CD4-positive, alpha-beta memory T cell (primary cell): ENCODE measurements at regions of chr12 and their contacts with region 1.

Region 1: DNA sequence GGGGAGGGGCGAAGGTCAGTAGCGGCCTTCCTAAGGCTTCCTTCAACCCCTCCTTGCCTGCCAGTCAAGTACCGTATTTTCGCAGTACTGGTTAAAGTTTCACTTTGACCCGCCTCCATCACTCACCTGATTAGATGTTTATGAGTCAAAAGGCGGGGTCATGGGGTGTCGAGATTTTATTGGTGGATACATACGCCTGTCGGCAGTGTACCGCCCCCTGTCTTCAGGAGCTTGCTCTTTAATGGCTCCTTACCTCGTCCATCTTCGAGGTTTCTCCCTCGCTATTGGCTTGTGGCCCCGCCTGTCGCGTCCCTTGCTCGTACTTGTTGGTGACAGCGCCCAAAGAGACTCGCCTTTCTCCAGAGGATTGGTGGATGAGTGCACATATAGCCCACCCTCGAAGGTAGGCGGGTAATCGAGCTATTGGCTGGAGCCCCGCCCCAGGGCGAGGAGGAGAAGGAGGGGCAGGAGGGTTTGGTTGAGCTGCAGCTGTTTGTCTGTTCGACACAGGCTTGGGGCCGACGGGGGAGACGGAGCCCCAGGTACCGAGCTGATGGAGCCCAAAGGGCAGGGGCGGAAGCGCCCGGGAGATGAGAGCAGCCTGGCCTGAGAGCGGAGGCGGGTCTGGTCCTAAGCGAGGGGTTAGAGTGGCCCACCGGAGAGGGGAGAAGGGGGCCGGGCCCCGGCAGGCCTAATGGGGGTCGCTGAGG is at the start of gene RAB5B:
- DNase-seq: peak; percentile 95 to 100 (median 99)
- H3K4me3 ChIP-seq: peak within 1 kb of the TSS; percentile 60 to 73
- H3K4me3 Mint-ChIP-seq: no peak within 1 kb of the TSS
- H3K27ac ChIP-seq: peak within 1 kb of the TSS; percentile 87
- H3K27ac Mint-ChIP-seq: no peak within 1 kb of the TSS
- H3K4me1 ChIP-seq: peaks cover 37% of the 10 kb centered on the region
- H3K4me1 Mint-ChIP-seq: peaks cover 14 to 30% (median 23%) of the 10 kb centered on the region in 4 donors
- H3K27me3 ChIP-seq: no peaks in the 10 kb centered on the region
- H3K27me3 Mint-ChIP-seq: no peaks in the 10 kb centered on the region
- total RNA-seq, gene RAB5B: 106 to 112 TPM

Region 2: DNA sequence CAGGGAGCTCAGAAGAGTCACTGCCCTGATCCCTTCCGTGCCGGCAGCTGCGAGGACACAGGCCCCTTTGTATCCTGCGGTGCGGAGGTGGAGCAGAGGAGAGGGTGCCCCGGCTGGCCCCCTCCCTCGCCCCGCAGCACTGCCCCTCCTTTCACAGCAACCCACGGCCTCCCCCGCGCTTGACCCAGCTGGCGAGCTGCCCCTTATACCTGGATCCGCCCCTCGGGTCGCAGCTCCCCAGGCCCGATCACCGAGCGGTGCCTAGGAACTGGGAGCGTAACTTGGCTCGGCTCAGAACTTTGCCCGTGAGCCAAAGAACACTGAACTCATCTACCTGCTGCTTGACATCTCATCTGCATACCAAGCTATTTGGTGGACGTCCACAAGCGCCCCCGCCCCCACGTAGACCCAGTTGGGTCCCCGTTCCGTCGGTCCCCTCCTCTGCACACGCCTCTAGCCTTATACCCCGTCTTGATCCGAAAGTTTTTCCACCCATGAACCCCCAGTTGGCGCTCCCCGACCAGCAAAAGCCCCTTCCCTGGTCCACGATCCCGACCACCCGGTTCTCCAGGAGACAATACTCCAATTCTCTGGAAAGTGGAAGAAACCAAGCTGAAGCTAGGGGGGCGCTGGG is 143.7 kb before region 1 on chr12:
- CTCF ChIA-PET with region 1: interaction called, 4 read pairs
- POLR2A ChIA-PET with region 1: interaction called, 39 read pairs
- intact Hi-C with region 1: loop called (anchors 1 kb)
- DNase-seq: peak in 4 of 5 donors; percentile 18 to 55 (median 22)
- H3K4me3 ChIP-seq: peak overlapping the region; percentile 88 to 93
- H3K4me3 Mint-ChIP-seq: peak overlapping the region; percentile 95 to 99 (median 98)
- H3K27ac ChIP-seq: peak overlapping the region; percentile 59
- H3K27ac Mint-ChIP-seq: peak overlapping the region; percentile 89 to 97 (median 95)
- H3K4me1 ChIP-seq: peaks cover 54% of the 10 kb centered on the region
- H3K4me1 Mint-ChIP-seq: peaks cover 28 to 66% (median 41%) of the 10 kb centered on the region in 4 donors
- H3K27me3 ChIP-seq: no peaks in the 10 kb centered on the region
- H3K27me3 Mint-ChIP-seq: no peaks in the 10 kb centered on the region

Region 3: DNA sequence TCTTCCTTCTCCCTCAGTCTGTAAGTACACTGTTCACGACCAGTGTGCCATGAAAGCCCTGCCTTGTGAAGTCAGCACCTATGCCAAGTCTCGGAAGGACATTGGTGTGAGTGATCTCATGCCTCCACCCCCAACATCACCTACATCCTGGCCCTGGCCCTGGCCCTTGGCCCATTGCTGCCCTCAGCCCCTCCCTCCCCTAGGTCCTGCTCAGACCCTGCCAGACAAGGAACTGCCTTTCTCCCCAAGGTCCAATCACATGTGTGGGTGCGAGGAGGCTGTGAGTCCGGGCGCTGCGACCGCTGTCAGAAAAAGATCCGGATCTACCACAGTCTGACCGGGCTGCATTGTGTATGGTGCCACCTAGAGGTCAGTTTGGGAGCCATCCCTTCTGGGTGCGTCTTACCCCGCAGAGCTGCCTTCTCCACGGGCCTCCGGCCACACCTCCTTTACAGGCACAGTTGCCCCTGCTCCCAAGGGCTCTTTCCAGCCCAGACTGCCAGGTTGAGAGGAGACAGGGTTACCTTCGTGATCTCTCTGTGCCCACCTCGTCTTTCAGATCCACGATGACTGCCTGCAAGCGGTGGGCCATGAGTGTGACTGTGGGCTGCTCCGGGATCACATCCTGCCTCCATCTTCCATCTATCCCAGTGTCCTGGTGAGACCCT is 33.6 kb before region 1 on chr12:
- CTCF ChIA-PET with region 1: interaction called, 15 read pairs
- POLR2A ChIA-PET with region 1: interaction called, 155 read pairs
- intact Hi-C with region 1: no loop called
- DNase-seq: peak; percentile 83 to 86 (median 84)
- H3K4me3 ChIP-seq: peak overlapping the region in 1 of 2 donors; percentile 4
- H3K4me3 Mint-ChIP-seq: peak overlapping the region in 7 of 8 donors; percentile 32 to 76 (median 62)
- H3K27ac ChIP-seq: peak overlapping the region; percentile 48
- H3K27ac Mint-ChIP-seq: peak overlapping the region; percentile 82 to 96 (median 92)
- H3K4me1 ChIP-seq: peaks cover 66% of the 10 kb centered on the region
- H3K4me1 Mint-ChIP-seq: peaks cover 56 to 89% (median 66%) of the 10 kb centered on the region in 4 donors
- H3K27me3 ChIP-seq: no peaks in the 10 kb centered on the region
- H3K27me3 Mint-ChIP-seq: no peaks in the 10 kb centered on the region

Region 4: DNA sequence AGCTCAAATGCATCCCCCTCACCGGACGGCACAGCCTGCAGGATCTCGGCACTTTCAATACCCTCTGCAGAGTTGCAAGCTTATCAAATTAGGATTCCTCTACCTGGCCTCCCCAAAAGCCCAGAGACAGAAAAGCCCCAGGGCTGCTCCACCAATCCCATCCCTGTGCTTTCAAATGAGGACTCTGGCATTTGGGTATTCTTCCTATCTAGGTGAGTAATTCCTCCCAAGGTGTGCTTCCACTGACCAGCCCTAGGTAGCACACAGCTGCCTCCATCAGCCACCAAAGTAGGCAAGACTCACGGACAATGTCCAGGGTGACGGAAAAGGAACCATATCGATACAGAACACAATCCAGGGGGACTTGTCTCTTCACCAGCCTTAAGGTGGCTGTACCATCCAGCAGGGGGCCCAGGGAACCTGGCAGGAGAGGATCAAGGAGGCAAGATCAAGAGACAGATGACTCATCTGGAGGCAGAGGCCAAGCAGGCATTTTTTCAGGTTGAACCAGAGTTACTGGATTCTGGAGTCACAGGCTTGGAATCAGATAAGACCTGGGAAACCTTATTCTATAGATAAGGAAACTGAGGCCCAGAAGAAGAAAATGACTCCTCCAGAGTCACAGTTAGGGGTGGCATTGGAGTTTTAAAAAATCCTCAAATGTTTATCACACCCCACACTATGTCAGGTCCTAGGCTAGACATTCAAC is 17.8 kb before region 1 on chr12:
- CTCF ChIA-PET with region 1: interaction called, 15 read pairs
- POLR2A ChIA-PET with region 1: interaction called, 68 read pairs
- intact Hi-C with region 1: loop called (anchors 2 kb)
- DNase-seq: peak in 4 of 5 donors; percentile 26 to 66 (median 31)
- H3K4me3 ChIP-seq: no peak overlapping the region
- H3K4me3 Mint-ChIP-seq: no peak overlapping the region
- H3K27ac ChIP-seq: no peak overlapping the region
- H3K27ac Mint-ChIP-seq: peak overlapping the region; percentile 30 to 76 (median 69)
- H3K4me1 ChIP-seq: peaks cover 21% of the 10 kb centered on the region
- H3K4me1 Mint-ChIP-seq: peaks cover 13 to 28% (median 19%) of the 10 kb centered on the region in 4 donors
- H3K27me3 ChIP-seq: no peaks in the 10 kb centered on the region
- H3K27me3 Mint-ChIP-seq: no peaks in the 10 kb centered on the region

Region 5: DNA sequence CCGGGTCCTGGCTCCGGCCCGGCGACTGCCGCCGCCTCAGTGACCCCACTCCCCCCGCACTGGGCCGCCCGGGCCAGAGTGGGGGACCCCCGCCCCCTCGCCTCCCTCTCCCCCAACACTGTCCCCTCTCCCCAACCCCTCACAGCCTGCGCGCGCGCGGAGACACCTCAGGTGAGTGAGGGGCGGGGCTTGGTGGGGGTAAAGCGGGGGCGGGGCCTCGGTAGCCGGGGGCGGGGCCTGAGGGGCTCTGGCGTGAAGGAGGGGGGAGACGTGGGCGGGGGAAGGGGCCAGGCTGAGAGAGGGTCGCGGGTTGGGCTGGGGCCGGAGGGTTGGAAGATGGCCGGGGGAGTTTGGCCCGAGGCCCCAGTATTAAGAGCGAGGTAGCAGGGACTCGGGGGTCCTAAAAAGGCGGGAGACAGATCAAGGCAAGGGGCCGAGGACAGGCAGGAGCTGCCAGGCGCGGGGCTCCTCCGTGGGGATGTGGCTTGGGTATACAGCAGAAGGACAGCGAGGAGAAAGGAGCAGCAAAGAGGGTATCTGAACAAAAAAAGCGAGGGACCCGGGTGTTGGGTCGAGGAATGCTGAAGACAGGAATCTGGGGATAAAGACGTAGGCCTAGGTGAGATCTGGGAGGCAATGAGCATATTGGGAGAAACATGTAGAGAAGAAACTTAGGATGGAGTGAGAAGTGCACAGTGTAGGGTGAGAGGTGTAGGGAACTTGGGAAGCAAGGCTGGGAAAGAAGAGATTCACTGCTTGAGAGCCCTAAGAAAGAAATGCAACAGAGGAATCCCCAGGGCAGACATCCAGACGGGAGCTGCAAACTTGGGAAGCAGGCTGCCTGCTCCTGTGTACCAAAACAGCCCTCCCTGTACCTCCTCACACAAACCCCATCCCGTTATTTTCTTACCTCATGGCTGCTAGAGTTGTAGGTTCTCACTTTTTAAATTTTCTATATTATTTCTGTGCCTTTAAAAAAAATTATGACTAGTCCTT is 34.1 kb after region 1 on chr12:
- CTCF ChIA-PET with region 1: no interaction called
- POLR2A ChIA-PET with region 1: interaction called, 14 read pairs
- intact Hi-C with region 1: no loop called
- DNase-seq: peak; percentile 59 to 67 (median 62)
- H3K4me3 ChIP-seq: peak overlapping the region; percentile 38 to 61
- H3K4me3 Mint-ChIP-seq: peak overlapping the region; percentile 89 to 95 (median 92)
- H3K27ac ChIP-seq: peak overlapping the region; percentile 49
- H3K27ac Mint-ChIP-seq: peak overlapping the region; percentile 83 to 97 (median 92)
- H3K4me1 ChIP-seq: peaks cover 10% of the 10 kb centered on the region
- H3K4me1 Mint-ChIP-seq: peaks cover 10 to 28% (median 22%) of the 10 kb centered on the region in 4 donors
- H3K27me3 ChIP-seq: no peaks in the 10 kb centered on the region
- H3K27me3 Mint-ChIP-seq: no peaks in the 10 kb centered on the region

Region 6: GRCh38 chr12:57621497-57622292 is 1647.9 kb after region 1 on chr12:
- CTCF ChIA-PET with region 1: no interaction called
- POLR2A ChIA-PET with region 1: no interaction called
- intact Hi-C with region 1: no loop called
- DNase-seq: peak; percentile 34 to 57 (median 39)
- H3K4me3 ChIP-seq: peak overlapping the region in 1 of 2 donors; percentile 23
- H3K4me3 Mint-ChIP-seq: peak overlapping the region; percentile 63 to 90 (median 76)
- H3K27ac ChIP-seq: no peak overlapping the region
- H3K27ac Mint-ChIP-seq: peak overlapping the region in 2 of 7 donors; percentile 23 to 77
- H3K4me1 ChIP-seq: peaks cover 29% of the 10 kb centered on the region
- H3K4me1 Mint-ChIP-seq: peaks cover 24 to 36% (median 28%) of the 10 kb centered on the region in 4 donors
- H3K27me3 ChIP-seq: peaks cover 79% of the 10 kb centered on the region
- H3K27me3 Mint-ChIP-seq: peaks cover 82 to 87% of the 10 kb centered on the region in 2 donors